Activated CD4-positive, alpha-beta T cell treated with anti-CD3 and anti-CD28 coated beads for 36 hours (primary cell): ENCODE measurements at regions of chr5 and their contacts with region 1.

Region 1: GRCh38 chr5:82676661-82677060 is 398.5 kb upstream of the RPS23 start:
- DNase-seq: peak; percentile 35
- ATAC-seq: peak; percentile 84
- H3K4me3 Mint-ChIP-seq: peak overlapping the region; percentile 31
- H3K27ac Mint-ChIP-seq: peak overlapping the region; percentile 22
- H3K4me1 Mint-ChIP-seq: peaks cover 19% of the 10 kb centered on the region
- H3K27me3 Mint-ChIP-seq: peaks cover 2% of the 10 kb centered on the region

Region 2: DNA sequence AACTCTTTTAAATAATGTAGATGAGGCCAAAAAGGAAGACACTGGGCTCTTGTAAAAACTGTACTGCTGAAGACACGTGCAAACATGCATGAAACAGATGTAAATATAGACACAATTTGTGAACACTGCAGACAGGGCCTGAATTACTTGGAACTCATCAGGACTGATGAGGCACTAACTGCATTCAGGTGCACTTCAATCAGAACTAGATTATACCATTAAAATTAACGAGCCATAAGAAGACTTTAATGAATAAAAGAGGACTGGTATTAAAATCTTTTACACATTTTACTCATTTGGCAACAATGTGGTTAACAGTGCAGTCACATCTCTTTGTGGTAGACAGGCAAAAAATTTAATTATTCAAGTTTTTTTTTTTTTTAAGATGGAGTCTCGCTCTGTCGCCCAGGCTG is 1388.6 kb before region 1 on chr5:
- CTCF ChIA-PET with region 1: no interaction called
- POLR2A ChIA-PET with region 1: no interaction called
- intact Hi-C with region 1: loop called in 1 of 2 experiments (anchors 10 kb)
- DNase-seq: no peak
- ATAC-seq: peak; percentile 14
- H3K4me3 Mint-ChIP-seq: no peak overlapping the region
- H3K27ac Mint-ChIP-seq: no peak overlapping the region
- H3K4me1 Mint-ChIP-seq: peaks cover 57% of the 10 kb centered on the region
- H3K27me3 Mint-ChIP-seq: no peaks in the 10 kb centered on the region

Region 3: GRCh38 chr5:82364497-82364896 is 312.2 kb before region 1 on chr5:
- CTCF ChIA-PET with region 1: no interaction called
- POLR2A ChIA-PET with region 1: no interaction called
- intact Hi-C with region 1: loop called in 1 of 2 experiments (anchors 2 kb)
- DNase-seq: no peak
- ATAC-seq: no peak
- H3K4me3 Mint-ChIP-seq: no peak overlapping the region
- H3K27ac Mint-ChIP-seq: no peak overlapping the region
- H3K4me1 Mint-ChIP-seq: peaks cover 22% of the 10 kb centered on the region
- H3K27me3 Mint-ChIP-seq: peaks cover 5% of the 10 kb centered on the region

Region 4: DNA sequence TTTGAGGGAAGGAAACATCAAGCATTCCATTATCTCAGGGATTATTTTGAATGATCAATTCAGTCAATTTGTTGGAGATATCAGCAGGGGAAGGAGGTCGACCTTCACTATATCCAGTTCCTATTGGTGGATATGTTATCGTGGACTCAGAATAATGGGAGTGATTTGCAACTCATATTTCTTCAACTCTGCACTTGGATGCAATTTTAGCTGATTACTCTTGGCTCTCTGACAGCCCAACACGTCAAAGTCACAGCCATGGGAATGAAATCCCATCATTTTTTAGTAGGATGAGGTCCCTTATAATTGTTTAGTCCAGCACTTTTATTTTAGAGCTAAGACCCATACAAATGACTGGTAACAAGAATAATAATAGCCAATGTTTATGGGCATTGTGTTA is 26.7 kb before region 1 on chr5:
- CTCF ChIA-PET with region 1: no interaction called
- POLR2A ChIA-PET with region 1: no interaction called
- intact Hi-C with region 1: no loop called
- DNase-seq: no peak
- ATAC-seq: no peak
- H3K4me3 Mint-ChIP-seq: no peak overlapping the region
- H3K27ac Mint-ChIP-seq: no peak overlapping the region
- H3K4me1 Mint-ChIP-seq: no peaks in the 10 kb centered on the region
- H3K27me3 Mint-ChIP-seq: peaks cover 7% of the 10 kb centered on the region

Region 5: GRCh38 chr5:82881571-82882174 is 205.0 kb after region 1 on chr5:
- CTCF ChIA-PET with region 1: no interaction called
- POLR2A ChIA-PET with region 1: no interaction called
- intact Hi-C with region 1: loop called in 1 of 2 experiments (anchors 5 kb)
- DNase-seq: no peak
- ATAC-seq: peak; percentile 66
- H3K4me3 Mint-ChIP-seq: no peak overlapping the region
- H3K27ac Mint-ChIP-seq: peak overlapping the region; percentile 24
- H3K4me1 Mint-ChIP-seq: peaks cover 28% of the 10 kb centered on the region
- H3K27me3 Mint-ChIP-seq: peaks cover 5% of the 10 kb centered on the region

Region 6: GRCh38 chr5:82967072-82967471 is 290.4 kb after region 1 on chr5:
- CTCF ChIA-PET with region 1: no interaction called
- POLR2A ChIA-PET with region 1: no interaction called
- intact Hi-C with region 1: loop called in 1 of 2 experiments (anchors 2 kb)
- DNase-seq: no peak
- ATAC-seq: no peak
- H3K4me3 Mint-ChIP-seq: no peak overlapping the region
- H3K27ac Mint-ChIP-seq: no peak overlapping the region
- H3K4me1 Mint-ChIP-seq: peaks cover 15% of the 10 kb centered on the region
- H3K27me3 Mint-ChIP-seq: no peaks in the 10 kb centered on the region